Activated T-helper 2 cell treated with anti-CD3 and anti-CD28 coated beads, Interferon-gamma antibody, Interleukin-2, Interleukin-4, amounts not matched to agents 10 μg/mL and 5 μg/mL and 100 μg/mL, durations not matched to agents 14 hours and 24 hours and 36 hours (primary cell): ENCODE measurements at regions of chr1 and their contacts with region 1.

Region 1: GRCh38 chr1:45490626-45491486 is at the start of gene TESK2:
- DNase-seq: peak; percentile 97
- H3K4me3 Mint-ChIP-seq: no peak within 1 kb of the TSS
- H3K27ac Mint-ChIP-seq: no peak within 1 kb of the TSS
- H3K4me1 Mint-ChIP-seq: peaks cover 9% of the 10 kb centered on the region
- H3K27me3 Mint-ChIP-seq: peaks cover 9% of the 10 kb centered on the region
- total RNA-seq, gene TESK2: 2.3 and 2.9 TPM in 2 replicates

Region 2: DNA sequence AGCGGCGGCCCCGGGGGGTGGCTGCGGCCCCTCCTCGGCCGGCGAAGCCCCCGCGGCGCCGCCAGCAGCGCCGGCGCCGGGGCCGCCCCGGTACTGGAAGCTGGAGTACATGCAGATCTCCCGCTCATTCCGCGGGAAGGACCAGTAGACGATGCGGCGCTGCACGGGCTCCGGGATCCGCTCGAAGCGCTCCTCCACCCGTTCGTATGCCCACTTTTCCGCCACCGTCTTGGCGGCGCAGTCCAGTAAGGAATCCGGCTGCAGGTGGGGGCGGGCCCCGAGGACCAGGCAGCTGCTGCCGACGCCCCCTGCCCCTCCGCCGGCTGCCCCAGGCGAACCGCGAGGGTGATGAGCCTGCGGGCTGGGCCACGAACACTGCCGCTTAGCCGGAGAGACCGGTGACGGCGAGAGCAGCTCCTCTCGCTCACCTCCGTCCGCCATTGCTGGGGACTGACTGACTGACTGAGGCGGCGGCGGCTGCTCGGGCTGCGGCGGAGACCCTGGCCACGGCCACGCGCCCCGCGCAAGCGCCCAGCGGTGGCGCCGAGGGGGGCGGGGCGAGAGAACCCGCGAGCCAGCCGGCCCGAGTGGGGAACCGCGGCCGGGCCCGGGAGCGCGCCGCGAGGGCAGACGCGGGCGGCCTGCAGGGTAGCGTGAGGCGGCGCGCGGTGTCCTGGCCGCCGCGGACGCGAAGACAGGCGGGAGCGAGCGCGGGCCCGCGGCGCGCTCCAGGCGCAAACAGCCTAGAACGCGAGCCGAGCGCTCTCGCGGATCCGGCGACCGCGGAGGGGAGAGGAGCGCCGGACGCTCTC is 284.7 kb before region 1 on chr1 and contains the start of gene ZSWIM5:
- intact Hi-C with region 1: loop called (anchors 10 kb)
- DNase-seq: peak; percentile 46
- H3K4me3 Mint-ChIP-seq: peak within 1 kb of the TSS; percentile 80
- H3K27ac Mint-ChIP-seq: peak within 1 kb of the TSS; percentile 20
- H3K4me1 Mint-ChIP-seq: peaks cover 14% of the 10 kb centered on the region
- H3K27me3 Mint-ChIP-seq: peaks cover 51% of the 10 kb centered on the region
- total RNA-seq, gene ZSWIM5: 0.14 and 0.21 TPM in 2 replicates

Region 3: DNA sequence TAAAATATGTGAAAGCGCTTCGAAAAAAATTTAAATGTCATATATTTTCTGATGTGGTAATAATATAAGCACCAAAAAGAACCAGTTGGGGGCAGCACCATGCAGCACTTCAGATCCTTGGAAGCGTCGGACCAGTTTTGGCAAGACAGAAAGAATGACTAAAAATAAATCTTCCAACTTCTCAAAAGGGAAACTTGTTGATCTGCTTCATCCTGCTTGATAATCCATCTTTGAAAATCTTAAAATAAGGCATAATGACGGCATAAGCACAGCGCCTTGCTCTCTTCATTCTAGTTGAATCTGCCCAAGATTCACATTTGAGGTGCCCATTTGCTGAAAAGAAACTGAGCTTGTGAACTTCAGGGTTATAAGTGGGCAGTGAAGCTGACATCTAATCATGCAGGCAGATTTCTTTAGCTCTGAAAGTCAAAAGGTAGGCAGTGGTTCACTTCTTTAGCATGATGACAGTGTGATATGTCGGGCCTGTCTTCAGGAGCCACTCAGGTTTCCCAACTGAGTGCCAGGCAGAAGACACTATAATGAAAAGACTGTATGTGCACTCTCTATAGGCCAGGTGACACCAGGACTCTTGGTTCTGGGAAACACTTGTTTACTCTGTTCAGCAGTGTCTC is 130.9 kb before region 1 on chr1:
- intact Hi-C with region 1: loop called (anchors 1 kb)
- DNase-seq: no peak
- H3K4me3 Mint-ChIP-seq: no peak overlapping the region
- H3K27ac Mint-ChIP-seq: no peak overlapping the region
- H3K4me1 Mint-ChIP-seq: peaks cover 11% of the 10 kb centered on the region
- H3K27me3 Mint-ChIP-seq: no peaks in the 10 kb centered on the region

Region 4: DNA sequence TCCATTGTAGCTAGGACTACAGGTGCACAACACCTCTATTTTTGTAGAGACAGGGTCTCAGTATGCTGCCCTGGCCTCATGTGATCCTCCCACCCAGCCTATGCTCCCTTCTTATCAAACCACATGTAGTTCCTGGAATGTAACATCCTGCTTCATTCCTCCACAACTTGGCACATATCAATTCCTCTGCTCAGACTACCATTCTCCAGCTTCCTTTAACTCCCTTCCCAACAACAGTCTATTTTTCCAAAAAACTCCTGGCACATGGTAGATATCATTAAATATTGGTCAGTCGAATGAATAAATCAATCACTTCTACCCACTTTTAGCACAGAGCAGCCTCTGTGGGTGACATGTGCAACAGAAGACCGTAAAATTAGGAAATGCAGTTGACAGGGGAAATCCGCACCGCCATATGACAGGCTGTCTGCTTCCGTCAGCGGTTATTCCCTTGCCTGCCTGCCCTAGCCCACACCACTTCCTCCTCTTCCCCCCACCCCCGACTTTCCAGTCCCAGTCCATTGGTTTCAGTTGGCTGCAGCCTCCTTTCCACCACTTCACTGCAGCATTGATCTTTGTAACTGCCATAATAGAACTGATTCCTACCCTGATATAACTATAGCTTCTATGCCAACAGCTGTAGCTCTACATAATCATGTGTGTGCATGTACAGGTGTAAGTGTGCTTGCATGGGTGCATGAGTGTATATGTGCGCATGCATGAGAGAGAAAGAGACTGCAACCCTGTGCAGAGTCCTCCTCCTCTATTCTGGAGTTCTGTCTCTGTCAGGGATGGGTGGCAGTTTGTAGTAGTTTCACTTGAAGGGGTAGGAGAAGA is 52.9 kb after region 1 on chr1:
- intact Hi-C with region 1: no loop called
- DNase-seq: peak; percentile 63
- H3K4me3 Mint-ChIP-seq: peak overlapping the region; percentile 54
- H3K27ac Mint-ChIP-seq: peak overlapping the region; percentile 68
- H3K4me1 Mint-ChIP-seq: peaks cover 33% of the 10 kb centered on the region
- H3K27me3 Mint-ChIP-seq: peaks cover 3% of the 10 kb centered on the region